Heart left ventricle (tissue), 16 donors: ENCODE measurements at regions of chr19 and their contacts with region 1.

Region 1: GRCh38 chr19:56080669-56081401 is 40.3 kb downstream of the ZNF787 start:
- DNase-seq: peak; percentile 76 to 90 (median 82)
- ATAC-seq: peak; percentile 77 to 87 (median 78)
- H3K4me3 ChIP-seq: peak overlapping the region; percentile 20 to 59 (median 50)
- H3K27ac ChIP-seq: peak overlapping the region in 7 of 12 donors; percentile 18 to 65 (median 39)
- H3K4me1 ChIP-seq: peaks cover 0 to 15% (median 9%) of the 10 kb centered on the region in 12 donors
- H3K27me3 ChIP-seq: no peaks in the 10 kb centered on the region
- CTCF ChIP-seq: peak; percentile 38 to 67 (median 55)
- POLR2A ChIP-seq: no peak

Region 2: DNA sequence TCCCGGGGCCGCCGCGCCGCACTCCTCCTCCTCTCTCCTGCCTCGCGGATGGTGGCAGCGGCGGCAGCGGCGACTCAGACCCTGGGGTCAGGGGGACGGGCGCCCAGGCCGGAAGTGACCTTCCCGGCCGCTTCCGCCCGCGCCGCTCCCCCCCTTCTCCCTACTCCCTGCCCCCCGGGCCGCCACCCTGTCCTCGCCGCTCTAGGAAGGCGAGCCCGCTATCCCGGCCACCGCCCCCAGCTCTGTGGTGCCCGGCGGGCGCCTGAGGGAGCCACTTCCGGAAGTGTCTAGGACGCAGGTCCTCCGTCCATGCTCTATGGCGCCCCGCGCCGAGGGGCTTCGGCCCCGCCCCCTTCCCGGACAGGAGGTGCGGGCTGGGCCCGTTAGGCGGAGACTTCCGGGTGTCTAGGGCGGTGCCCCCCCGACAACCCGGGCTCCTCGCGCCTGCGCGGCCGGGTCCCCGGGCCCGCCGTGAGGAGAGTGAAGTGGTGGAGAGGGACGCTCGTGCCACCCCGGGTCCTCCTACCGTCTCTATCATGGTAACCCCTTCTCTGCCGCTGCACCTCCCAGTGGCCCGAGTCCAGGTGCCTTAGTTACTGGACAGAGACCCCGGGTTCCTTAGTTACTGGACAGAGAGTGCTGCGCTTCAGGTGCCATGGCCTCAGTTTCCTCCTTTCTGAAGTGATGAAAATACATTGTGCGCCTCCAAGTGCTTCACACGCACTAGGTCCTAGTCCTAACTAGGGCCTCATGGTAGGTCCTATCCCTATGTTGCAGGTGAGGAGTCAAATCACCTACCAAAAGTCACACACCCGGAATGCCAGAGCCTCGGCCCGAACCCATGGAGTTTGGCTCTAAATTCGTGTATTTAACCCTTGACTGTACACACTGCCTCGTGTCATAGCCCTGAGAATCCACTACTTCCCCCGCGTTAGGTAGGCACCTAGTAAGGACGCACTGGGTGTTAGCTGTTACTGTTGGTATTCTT is 40.6 kb after region 1 on chr19 and contains the start of gene ZNF787:
- intact Hi-C with region 1: loop called in 3 of 10 experiments (anchors 5 kb)
- DNase-seq: peak; percentile 98 to 100 (median 99)
- ATAC-seq: peak; percentile 94 to 95 (median 95)
- H3K4me3 ChIP-seq: peak within 1 kb of the TSS; percentile 54 to 97 (median 82)
- H3K27ac ChIP-seq: peak within 1 kb of the TSS; percentile 89 to 100 (median 95)
- H3K4me1 ChIP-seq: peaks cover 12 to 45% (median 37%) of the 10 kb centered on the region in 12 donors
- H3K27me3 ChIP-seq: no peaks in the 10 kb centered on the region
- CTCF ChIP-seq: peak in 2 of 12 donors; percentile 11 to 14
- POLR2A ChIP-seq: peak in 1 of 2 donors; percentile 53
- total RNA-seq, gene ZNF787: 11.6 to 40.8 (median 24.9) TPM

Region 3: DNA sequence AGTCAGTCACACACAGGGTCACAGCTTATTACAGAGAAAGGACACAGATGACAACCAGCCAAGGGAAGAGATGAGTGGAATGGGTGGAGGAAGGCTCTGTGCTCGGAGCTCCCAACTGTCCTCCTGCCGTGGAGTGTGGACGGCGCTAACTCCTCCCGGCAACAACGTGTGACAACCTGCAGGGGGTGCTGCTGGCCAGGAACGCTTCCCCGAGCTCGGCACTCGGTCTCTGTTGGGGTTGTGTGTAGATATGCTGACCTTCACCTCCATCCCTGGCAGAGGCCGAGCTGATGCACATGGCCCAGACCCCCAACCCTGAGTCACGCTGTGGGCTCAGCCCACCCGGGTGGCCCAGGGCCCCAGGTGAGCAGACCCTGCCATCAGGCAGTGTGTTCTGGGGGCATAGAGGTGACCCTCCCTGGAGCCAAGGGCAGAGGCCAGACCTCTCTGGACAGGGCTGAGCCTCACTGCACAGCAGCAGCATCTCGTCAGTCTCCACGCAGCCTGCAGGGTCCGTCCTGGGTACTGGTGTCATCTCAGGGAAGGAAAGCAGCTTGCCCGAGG is 74.4 kb after region 1 on chr19:
- intact Hi-C with region 1: loop called in 3 of 10 experiments (anchors 5 to 10 kb)
- DNase-seq: peak in 1 of 5 donors; percentile 47
- ATAC-seq: peak in 3 of 4 donors; percentile 44 to 54 (median 51)
- H3K4me3 ChIP-seq: no peak overlapping the region
- H3K27ac ChIP-seq: no peak overlapping the region
- H3K4me1 ChIP-seq: peaks cover 0 to 22% (median 7%) of the 10 kb centered on the region in 12 donors
- H3K27me3 ChIP-seq: no peaks in the 10 kb centered on the region
- CTCF ChIP-seq: peak; percentile 20 to 65 (median 44)
- POLR2A ChIP-seq: no peak

Region 4: GRCh38 chr19:56170261-56170660 is 89.4 kb after region 1 on chr19:
- intact Hi-C with region 1: loop called (anchors 1 to 5 kb)
- DNase-seq: peak in 3 of 5 donors; percentile 35 to 50 (median 45)
- ATAC-seq: peak; percentile 30 to 92 (median 46)
- H3K4me3 ChIP-seq: no peak overlapping the region
- H3K27ac ChIP-seq: peak overlapping the region in 3 of 12 donors; percentile 5 to 46 (median 28)
- H3K4me1 ChIP-seq: peaks cover 0 to 6% (median 0%) of the 10 kb centered on the region in 12 donors
- H3K27me3 ChIP-seq: peaks cover 0 to 9% (median 6%) of the 10 kb centered on the region in 9 donors
- CTCF ChIP-seq: no peak
- POLR2A ChIP-seq: no peak

Region 5: DNA sequence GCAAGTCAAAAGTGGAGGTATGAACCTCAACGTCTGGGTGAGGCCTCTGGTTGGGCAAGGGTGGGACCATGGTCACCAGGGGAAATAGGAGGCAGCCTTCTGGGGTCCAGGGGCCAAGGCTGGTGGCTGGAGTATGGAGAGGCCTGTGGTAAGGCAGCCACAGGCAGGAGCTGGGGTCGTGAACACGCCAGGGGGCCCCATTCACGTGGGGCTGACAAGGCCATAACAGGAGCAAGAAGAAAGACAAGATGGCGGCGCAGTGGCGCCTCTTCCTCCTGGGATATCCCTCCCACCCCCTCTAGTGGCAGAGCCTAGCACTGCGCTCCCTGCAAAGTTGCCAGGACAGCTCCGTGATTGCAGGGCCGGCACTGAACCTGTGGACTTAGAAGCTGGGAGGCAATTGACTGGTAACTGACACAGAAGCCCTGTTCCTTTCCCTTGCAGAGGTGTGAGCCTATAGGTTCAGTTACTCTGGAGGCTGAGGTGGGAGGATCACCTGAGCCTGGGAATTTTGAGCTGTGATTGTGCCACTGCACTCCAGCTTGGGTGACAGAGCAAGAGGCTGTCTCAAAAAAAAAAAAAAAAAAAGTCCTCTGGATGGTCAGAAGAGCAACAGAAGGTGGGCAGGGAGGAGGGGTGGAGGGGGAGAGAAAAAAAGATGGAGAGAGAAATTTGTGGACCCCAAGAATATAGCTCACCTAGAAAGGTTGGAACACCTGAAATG is 172.0 kb after region 1 on chr19:
- intact Hi-C with region 1: loop called in 5 of 10 experiments (anchors 2 to 5 kb)
- DNase-seq: peak; percentile 48 to 90 (median 70)
- ATAC-seq: peak in 3 of 4 donors; percentile 74 to 84 (median 82)
- H3K4me3 ChIP-seq: no peak overlapping the region
- H3K27ac ChIP-seq: no peak overlapping the region
- H3K4me1 ChIP-seq: no peaks in the 10 kb centered on the region
- H3K27me3 ChIP-seq: no peaks in the 10 kb centered on the region
- CTCF ChIP-seq: peak; percentile 68 to 89 (median 80)
- POLR2A ChIP-seq: no peak

Region 6: GRCh38 chr19:56333505-56333904 is 252.7 kb after region 1 on chr19:
- intact Hi-C with region 1: loop called in 6 of 10 experiments (anchors 5 to 10 kb)
- DNase-seq: peak in 1 of 5 donors; percentile 24
- ATAC-seq: peak in 2 of 4 donors; percentile 60 to 69
- H3K4me3 ChIP-seq: no peak overlapping the region
- H3K27ac ChIP-seq: no peak overlapping the region
- H3K4me1 ChIP-seq: no peaks in the 10 kb centered on the region
- H3K27me3 ChIP-seq: no peaks in the 10 kb centered on the region
- CTCF ChIP-seq: peak; percentile 36 to 70 (median 60)
- POLR2A ChIP-seq: no peak

Region 7: GRCh38 chr19:56350416-56351045 is 269.7 kb after region 1 on chr19:
- intact Hi-C with region 1: loop called in 7 of 10 experiments (anchors 2 to 10 kb)
- DNase-seq: peak in 3 of 5 donors; percentile 22 to 33 (median 26)
- ATAC-seq: peak in 2 of 4 donors; percentile 47 to 50
- H3K4me3 ChIP-seq: no peak overlapping the region
- H3K27ac ChIP-seq: no peak overlapping the region
- H3K4me1 ChIP-seq: no peaks in the 10 kb centered on the region
- H3K27me3 ChIP-seq: no peaks in the 10 kb centered on the region
- CTCF ChIP-seq: peak; percentile 76 to 95 (median 88)
- POLR2A ChIP-seq: no peak

Region 8: DNA sequence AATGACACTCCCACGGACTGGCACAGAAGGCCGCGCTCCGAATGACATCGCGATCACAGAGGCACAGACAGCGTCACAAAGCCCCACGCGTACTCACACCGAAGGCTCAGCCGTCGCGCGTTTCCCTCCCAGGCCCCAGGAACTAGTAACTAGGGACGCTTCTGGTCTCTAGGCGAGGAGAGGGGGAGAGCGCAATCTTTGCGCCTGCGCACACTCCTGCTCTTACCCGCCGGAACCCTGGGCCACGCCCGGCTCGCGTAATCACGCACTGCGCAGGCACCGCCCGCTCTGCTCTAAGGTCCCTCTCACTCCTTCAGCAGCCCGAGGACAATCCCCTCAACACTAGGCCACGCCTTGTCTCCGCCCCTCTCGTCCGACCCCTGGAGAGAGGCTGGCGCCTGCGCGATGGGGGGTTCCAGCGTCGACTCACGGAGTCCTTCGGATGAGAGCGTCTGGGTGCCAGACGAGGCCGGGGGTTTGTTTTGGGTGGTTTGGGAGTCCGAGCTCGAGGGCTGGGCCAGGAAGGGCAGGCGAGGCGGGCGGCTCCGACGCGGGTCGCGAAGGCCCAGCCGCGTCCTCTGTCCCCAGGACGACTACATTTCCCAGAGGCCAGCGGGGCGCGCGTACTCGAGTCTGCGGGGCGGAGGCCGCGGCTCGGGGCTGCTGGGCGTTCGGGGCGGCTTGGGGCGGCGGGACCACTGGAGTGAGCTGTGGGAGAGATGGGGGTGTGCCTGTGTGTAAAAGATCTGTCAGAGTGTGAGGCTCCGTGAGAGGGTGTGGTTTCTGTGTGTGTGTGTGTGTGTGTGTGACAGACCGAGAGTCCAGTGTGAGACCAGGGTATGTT is 426.8 kb after region 1 on chr19 and contains the start of gene ZNF471:
- intact Hi-C with region 1: no loop called
- DNase-seq: peak; percentile 99 to 100 (median 99)
- ATAC-seq: peak; percentile 100
- H3K4me3 ChIP-seq: peak within 1 kb of the TSS; percentile 35 to 87 (median 73)
- H3K27ac ChIP-seq: peak within 1 kb of the TSS; percentile 90 to 100 (median 98)
- H3K4me1 ChIP-seq: peaks cover 0 to 13% (median 6%) of the 10 kb centered on the region in 12 donors
- H3K27me3 ChIP-seq: no peaks in the 10 kb centered on the region
- CTCF ChIP-seq: no peak
- POLR2A ChIP-seq: peak in 1 of 2 donors; percentile 62
- total RNA-seq, gene ZNF471: 3.3 to 7.9 (median 4.7) TPM